GM10248 (cell line): ENCODE measurements at regions of chr5 and their contacts with region 1.

Region 1: DNA sequence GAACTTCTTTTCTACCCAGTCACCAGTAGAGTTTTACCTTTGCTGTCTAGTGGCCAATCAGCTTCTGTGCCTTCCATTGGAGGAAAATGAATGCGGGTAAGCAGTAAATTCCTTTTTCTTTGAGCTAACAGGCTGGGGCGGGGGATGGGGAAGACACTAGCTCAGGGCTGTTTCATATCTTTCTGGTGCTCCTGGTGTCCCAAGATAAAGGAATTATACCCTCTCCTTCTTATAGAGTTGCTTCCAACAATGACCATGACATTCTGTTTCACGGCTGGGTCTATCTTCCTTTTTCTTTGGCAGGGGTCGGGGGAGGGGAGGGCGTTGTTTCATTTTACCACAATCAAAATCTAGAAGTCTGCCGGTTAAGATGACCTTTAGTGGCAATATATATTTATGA is 51.2 kb upstream of the RPS23 start:
- DNase-seq: no peak
- CTCF ChIP-seq: no peak

Region 2: DNA sequence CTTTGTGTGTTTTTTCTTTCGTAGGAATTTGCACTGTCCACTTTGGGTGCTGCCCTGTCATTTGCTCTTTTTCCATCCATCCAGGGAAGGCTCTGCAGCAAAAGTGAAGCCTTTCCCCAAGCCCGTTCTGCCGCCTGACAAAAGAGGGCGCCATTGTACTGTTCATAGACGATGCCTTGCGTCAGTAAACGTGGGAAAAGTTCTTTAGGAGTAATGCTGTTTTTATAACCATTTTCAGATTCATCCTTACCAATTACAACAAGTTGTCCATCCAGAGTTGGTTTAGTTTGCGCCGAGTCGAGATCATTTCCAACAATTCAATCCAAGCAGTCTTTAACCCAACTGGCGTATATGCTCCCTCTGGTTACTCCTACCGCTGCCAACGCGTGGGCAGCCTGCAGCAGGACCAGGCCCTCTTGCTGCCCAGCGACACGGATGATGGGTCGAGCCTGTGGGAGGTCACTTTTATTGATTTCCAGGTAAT is 17.0 kb before region 1 on chr5:
- CTCF ChIA-PET with region 1: interaction called, 10 read pairs
- POLR2A ChIA-PET with region 1: no interaction called
- DNase-seq: peak; percentile 31
- CTCF ChIP-seq: peak; percentile 65